ENCODE measurements at regions of chr22 and their contacts with region 1.

Region 1: DNA sequence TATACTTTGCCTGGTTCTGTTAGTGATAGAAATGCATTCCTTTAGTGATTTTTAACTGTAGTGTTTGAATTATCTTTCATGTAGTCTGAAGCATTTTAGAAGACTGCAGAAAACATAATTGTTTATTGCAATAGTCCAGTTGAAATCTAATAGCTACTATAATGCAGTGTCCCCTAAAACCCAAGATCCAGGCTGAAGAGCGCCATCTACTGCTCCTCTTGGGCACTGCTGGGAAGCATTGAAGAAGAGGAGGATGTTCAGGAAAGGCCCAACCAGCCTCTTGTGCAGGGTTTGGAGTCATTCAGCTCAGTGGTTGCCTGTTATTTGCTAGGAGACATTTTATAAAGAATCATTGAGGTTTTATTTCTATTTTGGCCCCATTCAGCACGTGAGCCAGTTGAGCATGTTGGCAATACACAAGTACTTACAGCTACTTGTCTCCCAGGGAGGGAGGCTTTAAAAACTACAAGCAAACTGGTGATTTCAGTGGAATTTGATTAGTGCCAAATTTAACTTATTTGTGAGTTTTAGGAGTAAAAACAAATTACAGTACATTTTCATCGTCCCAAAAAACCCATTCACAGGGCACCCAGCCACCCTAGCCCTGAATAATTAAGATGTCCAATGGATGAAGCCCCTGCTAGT is 74.9 kb upstream of the HORMAD2 start:
- DNase-seq: peak; percentile 58 to 90 (median 87)
- ATAC-seq: peak; percentile 78 to 86
- H3K4me3 ChIP-seq: no peak overlapping the region
- H3K27ac ChIP-seq: no peak overlapping the region
- H3K4me1 ChIP-seq: no peaks in the 10 kb centered on the region
- H3K27me3 ChIP-seq: no peaks in the 10 kb centered on the region

Region 2: GRCh38 chr22:29635734-29636357 is 369.5 kb before region 1 on chr22:
- intact Hi-C with region 1: loop called in 1 of 4 experiments (anchors 10 kb)
- DNase-seq: no peak
- ATAC-seq: peak; percentile 44 to 56
- H3K4me3 ChIP-seq: no peak overlapping the region
- H3K27ac ChIP-seq: no peak overlapping the region
- H3K4me1 ChIP-seq: peaks cover 6% of the 10 kb centered on the region
- H3K27me3 ChIP-seq: no peaks in the 10 kb centered on the region

Region 3: GRCh38 chr22:29689880-29690213 is 315.5 kb before region 1 on chr22:
- intact Hi-C with region 1: loop called in 1 of 4 experiments (anchors 5 kb)
- DNase-seq: peak; percentile 64 to 78 (median 78)
- ATAC-seq: peak; percentile 29 to 54
- H3K4me3 ChIP-seq: no peak overlapping the region
- H3K27ac ChIP-seq: no peak overlapping the region
- H3K4me1 ChIP-seq: no peaks in the 10 kb centered on the region
- H3K27me3 ChIP-seq: no peaks in the 10 kb centered on the region

Region 4: DNA sequence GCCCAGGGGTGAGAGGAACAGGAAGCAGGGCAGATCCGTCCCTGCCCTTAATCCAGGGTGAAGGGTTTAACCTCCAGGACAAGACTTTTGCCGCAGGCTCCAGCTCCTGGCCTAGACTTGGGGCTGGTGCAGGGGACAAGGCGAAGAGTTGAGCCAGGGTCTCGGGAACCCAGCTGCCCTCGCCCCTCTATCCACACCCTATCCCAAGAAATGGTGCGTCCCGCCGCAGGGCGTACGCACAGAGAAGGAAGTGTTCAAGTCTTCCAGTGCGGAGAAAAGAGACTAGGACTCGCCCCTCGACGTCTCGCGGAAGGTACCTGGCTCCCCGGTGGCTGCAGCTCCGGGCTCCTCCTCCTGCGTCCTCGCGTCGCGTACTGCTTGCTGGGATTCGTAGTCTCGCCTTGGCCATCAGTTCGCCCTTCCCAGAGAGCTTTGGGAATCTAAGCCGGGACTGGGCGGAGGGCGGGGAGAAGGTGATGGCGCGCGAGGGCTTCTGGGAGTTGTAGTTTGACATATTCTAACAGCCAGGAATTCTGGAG is 238.6 kb before region 1 on chr22 and contains the start of gene ZMAT5:
- intact Hi-C with region 1: loop called in 1 of 4 experiments (anchors 10 kb)
- DNase-seq: peak; percentile 95 to 98 (median 96)
- ATAC-seq: peak; percentile 99
- H3K4me3 ChIP-seq: peak within 1 kb of the TSS; percentile 73
- H3K27ac ChIP-seq: peak within 1 kb of the TSS; percentile 89
- H3K4me1 ChIP-seq: peaks cover 9% of the 10 kb centered on the region
- H3K27me3 ChIP-seq: no peaks in the 10 kb centered on the region
- total RNA-seq, gene ZMAT5: 21.2 to 28.6 (median 23.8) TPM

Measured in right cardiac atrium (tissue), 5 donors.